A673 (cell line): ENCODE measurements at regions of chrX and their contacts with region 1.

Region 1: DNA sequence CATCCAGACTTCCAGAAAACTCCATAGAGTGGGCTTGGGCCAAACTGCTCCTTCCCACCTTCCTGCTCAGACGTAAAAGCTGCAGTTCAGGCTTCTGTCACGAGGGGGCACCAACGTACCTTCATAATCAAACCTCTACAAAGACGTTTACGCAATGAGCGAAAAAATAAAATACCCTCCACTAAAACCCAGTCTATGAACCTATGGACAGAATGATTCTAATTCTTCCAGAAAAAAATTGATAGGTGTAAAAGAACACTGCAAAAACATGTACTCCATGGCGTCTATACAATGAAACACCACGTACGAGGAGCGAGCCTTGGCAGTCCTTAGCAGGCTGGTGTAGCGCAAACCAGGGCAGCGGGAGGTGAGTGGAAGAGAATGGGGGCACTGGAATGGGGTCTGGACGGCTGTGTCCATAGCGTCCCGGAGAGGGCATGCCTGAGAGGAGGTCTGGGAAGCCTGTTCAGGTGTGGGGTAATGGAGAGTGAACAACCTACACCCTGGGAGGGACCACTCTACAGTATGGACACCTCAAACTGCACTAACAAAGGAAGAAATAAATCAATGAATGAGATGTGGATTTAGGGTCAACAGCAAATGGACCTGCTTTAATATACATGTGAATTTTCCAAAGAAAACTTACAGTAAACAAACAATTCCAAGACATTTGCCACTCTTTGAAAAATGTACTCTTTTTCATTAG is 14.4 kb upstream of the RAB40A start:
- DNase-seq: peak; percentile 72
- H3K4me3 ChIP-seq: peak overlapping the region; percentile 31
- H3K27ac ChIP-seq: no peak overlapping the region
- H3K4me1 ChIP-seq: no peaks in the 10 kb centered on the region
- H3K27me3 ChIP-seq: no peaks in the 10 kb centered on the region
- CTCF ChIP-seq: peak; percentile 86

Region 2: DNA sequence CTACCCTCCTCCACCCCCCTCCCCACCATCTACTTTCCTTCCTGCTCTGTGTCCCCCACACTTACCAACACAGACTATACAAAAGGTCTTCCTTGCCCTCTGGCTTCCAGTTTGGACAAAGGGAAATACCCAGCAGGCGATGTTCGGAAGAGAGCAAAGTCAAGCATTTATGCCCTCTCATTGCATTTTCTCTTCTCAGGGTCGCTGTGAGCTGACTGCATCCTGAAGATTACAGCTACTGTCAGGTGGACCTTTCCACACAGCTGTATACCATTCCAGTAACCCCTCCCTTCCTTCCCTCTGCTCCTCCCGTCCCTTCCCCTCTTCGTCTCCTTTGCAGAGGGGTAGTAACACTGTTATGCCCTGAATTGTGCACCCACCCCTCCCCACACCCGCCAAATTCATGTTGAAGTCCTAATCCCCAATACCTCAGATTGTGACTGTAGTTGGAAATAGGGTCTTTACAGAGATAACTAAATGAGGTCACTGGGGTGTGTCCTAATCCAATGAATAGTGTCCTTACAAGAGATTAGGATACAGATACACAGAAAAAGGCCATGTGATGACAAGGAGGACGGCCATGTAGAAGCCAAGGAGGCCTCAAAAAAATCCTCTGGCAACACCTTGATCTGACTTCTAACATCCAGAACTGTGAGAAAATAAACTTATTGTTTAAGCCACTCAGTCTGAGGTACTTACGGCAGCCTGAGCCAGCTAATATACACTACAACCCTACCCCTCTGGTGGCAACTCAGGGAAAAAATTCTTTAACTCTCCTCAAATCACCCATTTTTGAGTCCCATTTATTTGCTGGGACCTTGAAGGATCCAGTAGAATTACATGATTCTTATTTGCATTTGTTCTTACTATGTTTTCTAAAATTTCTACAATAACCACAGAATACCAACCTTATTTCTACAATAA is 141.1 kb after region 1 on chrX:
- CTCF ChIA-PET with region 1: no interaction called
- POLR2A ChIA-PET with region 1: no interaction called
- intact Hi-C with region 1: loop called (anchors 10 kb)
- DNase-seq: no peak
- H3K4me3 ChIP-seq: no peak overlapping the region
- H3K27ac ChIP-seq: no peak overlapping the region
- H3K4me1 ChIP-seq: no peaks in the 10 kb centered on the region
- H3K27me3 ChIP-seq: no peaks in the 10 kb centered on the region
- CTCF ChIP-seq: no peak

Region 3: GRCh38 chrX:103774070-103774642 is 240.5 kb after region 1 on chrX:
- CTCF ChIA-PET with region 1: no interaction called
- POLR2A ChIA-PET with region 1: no interaction called
- intact Hi-C with region 1: loop called (anchors 5 kb)
- DNase-seq: peak; percentile 28
- H3K4me3 ChIP-seq: no peak overlapping the region
- H3K27ac ChIP-seq: no peak overlapping the region
- H3K4me1 ChIP-seq: no peaks in the 10 kb centered on the region
- H3K27me3 ChIP-seq: peaks cover 15% of the 10 kb centered on the region
- CTCF ChIP-seq: peak; percentile 57

Region 4: DNA sequence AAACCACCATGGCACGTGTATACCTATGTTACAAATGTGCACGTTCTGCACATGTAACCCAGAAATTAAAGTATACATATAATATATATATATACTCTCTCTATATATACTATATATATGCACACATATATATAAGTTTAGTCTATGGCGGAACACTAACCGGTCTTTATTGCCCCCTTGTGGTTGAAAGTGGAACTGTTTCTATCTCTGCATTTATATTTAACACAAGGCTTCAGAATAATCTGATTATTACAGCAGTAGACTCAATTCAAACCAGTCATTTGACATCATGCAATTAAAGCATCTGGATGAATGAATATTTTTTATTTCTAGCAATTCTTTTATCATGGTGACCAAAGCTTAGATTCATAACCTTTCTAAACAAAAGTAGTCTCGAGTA is 283.8 kb after region 1 on chrX:
- CTCF ChIA-PET with region 1: no interaction called
- POLR2A ChIA-PET with region 1: no interaction called
- intact Hi-C with region 1: loop called (anchors 1 kb)
- DNase-seq: peak; percentile 67
- H3K4me3 ChIP-seq: no peak overlapping the region
- H3K27ac ChIP-seq: no peak overlapping the region
- H3K4me1 ChIP-seq: no peaks in the 10 kb centered on the region
- H3K27me3 ChIP-seq: no peaks in the 10 kb centered on the region
- CTCF ChIP-seq: peak; percentile 67

Region 5: GRCh38 chrX:104136241-104137019 is 602.8 kb after region 1 on chrX:
- CTCF ChIA-PET with region 1: no interaction called
- POLR2A ChIA-PET with region 1: no interaction called
- intact Hi-C with region 1: loop called (anchors 10 kb)
- DNase-seq: peak; percentile 85
- H3K4me3 ChIP-seq: no peak overlapping the region
- H3K27ac ChIP-seq: no peak overlapping the region
- H3K4me1 ChIP-seq: no peaks in the 10 kb centered on the region
- H3K27me3 ChIP-seq: peaks cover 4% of the 10 kb centered on the region
- CTCF ChIP-seq: peak; percentile 76